Transverse colon (tissue), 4 donors: ENCODE measurements at regions of chr15 and their contacts with region 1.

Region 1: GRCh38 chr15:94677202-94677790 is 445.9 kb downstream of the MCTP2 start:
- DNase-seq: no peak
- H3K4me3 ChIP-seq: no peak overlapping the region
- H3K27ac ChIP-seq: no peak overlapping the region
- H3K4me1 ChIP-seq: no peaks in the 10 kb centered on the region
- H3K27me3 ChIP-seq: no peaks in the 10 kb centered on the region
- CTCF ChIP-seq: no peak
- EP300 ChIP-seq: no peak
- POLR2A ChIP-seq: no peak

Region 2: GRCh38 chr15:94793641-94794040 is 116.3 kb after region 1 on chr15:
- in situ Hi-C with region 1: loop called in 1 of 4 experiments (anchors 25 kb)
- intact Hi-C with region 1: no loop called
- DNase-seq: no peak
- H3K4me3 ChIP-seq: no peak overlapping the region
- H3K27ac ChIP-seq: no peak overlapping the region
- H3K4me1 ChIP-seq: no peaks in the 10 kb centered on the region
- H3K27me3 ChIP-seq: no peaks in the 10 kb centered on the region
- CTCF ChIP-seq: no peak
- EP300 ChIP-seq: no peak
- POLR2A ChIP-seq: no peak